Esophagus muscularis mucosa (tissue), 4 donors: ENCODE measurements at regions of chr6 and their contacts with region 1.

Region 1: DNA sequence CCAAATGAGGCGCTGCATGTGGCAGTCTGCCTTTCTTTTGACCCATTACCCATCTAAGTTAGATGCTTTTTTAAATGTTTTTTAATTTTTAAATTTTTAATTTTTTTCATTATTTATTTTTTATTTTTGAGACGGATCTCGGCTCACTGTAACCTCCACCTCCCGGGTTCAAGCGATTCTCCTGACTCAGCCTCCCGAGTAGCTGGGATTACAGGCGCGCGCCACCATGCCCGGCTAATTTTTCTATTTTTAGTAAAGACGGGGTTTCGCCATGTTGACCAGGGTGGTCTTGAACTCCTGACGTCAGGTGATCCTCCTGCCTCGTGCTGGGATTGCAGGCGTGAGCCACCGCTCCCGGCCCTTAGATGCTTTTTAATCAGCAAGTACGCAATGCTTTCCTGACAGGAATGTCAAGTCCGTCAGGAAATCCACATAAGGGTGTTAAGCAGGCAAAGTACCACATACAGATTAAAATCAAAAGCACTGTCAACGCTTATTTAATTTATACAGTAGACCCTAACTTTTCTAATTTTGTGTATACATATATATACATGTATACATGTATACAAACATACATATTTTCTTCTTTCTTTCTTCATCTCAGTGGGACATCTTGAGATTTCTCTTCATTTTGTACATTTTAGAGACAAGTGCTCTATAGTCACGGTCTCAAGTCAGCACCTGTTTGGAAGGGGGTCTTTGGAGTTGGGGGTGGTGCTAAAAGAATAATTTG is 995 bp upstream of the GSTA4 start:
- DNase-seq: no peak
- H3K4me3 ChIP-seq: peak overlapping the region; percentile 33 to 80 (median 73)
- H3K27ac ChIP-seq: peak overlapping the region; percentile 90 to 92 (median 92)
- H3K4me1 ChIP-seq: peaks cover 0 to 36% (median 28%) of the 10 kb centered on the region in 4 donors
- H3K27me3 ChIP-seq: no peaks in the 10 kb centered on the region
- CTCF ChIP-seq: no peak
- EP300 ChIP-seq: no peak
- POLR2A ChIP-seq: no peak

Region 2: DNA sequence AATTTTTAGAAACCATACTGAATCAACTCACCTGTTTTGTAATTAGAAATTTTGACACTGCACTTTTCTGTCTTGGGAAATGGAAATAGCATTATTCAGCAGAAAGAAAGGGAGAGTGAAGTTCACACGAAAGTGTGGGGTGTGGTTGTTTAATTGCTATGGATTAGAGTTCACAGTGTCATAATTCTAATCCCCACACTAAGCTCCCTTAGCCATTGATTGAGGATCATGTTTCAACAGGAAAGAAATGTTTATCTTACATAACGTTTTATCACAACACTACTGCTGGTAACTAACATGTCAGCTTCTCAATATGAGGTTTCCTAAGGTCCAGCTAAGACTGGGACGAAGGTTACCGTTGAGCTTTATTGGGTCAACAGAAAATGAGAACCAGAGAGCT is 124.0 kb before region 1 on chr6:
- intact Hi-C with region 1: no loop called
- DNase-seq: no peak
- H3K4me3 ChIP-seq: no peak overlapping the region
- H3K27ac ChIP-seq: no peak overlapping the region
- H3K4me1 ChIP-seq: no peaks in the 10 kb centered on the region
- H3K27me3 ChIP-seq: no peaks in the 10 kb centered on the region
- CTCF ChIP-seq: no peak
- EP300 ChIP-seq: no peak
- POLR2A ChIP-seq: no peak

Region 3: DNA sequence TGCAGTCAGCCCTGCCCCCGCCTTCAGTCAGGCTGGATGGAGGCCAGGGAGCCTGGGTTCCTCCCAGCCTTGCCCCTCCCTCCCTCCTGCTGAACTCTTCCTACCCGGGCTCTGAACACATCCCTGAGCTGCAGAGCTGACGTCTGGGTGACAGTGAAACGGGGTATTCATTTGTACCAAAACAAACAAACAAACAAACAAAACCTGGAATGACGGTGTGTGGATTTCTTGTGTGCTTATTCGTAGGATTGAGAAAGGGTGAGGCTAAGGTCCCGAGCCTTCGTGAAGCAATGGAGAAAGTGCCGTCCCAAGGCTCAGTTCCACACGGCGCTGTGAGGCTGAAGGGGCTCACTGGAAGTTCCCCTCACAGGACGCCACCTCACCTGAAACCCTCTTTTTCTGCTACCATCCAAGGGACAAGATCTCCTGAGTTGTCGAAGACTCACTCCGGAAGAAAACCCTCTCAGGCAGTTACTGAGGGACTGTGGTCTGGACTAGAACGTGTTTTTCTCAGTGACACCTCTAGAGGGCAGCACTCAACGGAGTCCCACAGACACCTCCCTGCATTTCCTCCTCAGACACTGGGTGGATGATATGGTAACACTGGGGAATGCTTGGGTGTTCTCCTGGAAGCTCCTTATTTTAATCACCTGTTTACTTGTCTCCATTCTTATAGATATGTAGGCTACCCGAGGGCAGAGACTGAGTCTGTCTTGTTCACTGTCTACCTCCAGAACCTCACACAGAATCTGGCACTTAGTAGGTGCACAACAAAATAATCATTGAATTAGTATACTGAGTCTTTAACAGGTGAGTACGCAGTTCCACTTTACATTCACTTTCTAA is 113.9 kb before region 1 on chr6:
- intact Hi-C with region 1: loop called (anchors 10 kb)
- DNase-seq: peak; percentile 90
- H3K4me3 ChIP-seq: peak overlapping the region; percentile 52 to 69 (median 59)
- H3K27ac ChIP-seq: peak overlapping the region; percentile 36 to 71 (median 47)
- H3K4me1 ChIP-seq: peaks cover 0 to 10% (median 6%) of the 10 kb centered on the region in 4 donors
- H3K27me3 ChIP-seq: no peaks in the 10 kb centered on the region
- CTCF ChIP-seq: peak; percentile 69 to 84 (median 75)
- EP300 ChIP-seq: no peak
- POLR2A ChIP-seq: no peak